ENCODE measurements at regions of chr1 and their contacts with region 1.

Region 1: GRCh38 chr1:156728597-156729462 is at the start of gene ISG20L2:
- DNase-seq: peak; percentile 96
- H3K4me3 Mint-ChIP-seq: no peak within 1 kb of the TSS
- H3K27ac Mint-ChIP-seq: no peak within 1 kb of the TSS
- H3K4me1 Mint-ChIP-seq: peaks cover 30% of the 10 kb centered on the region
- H3K27me3 Mint-ChIP-seq: no peaks in the 10 kb centered on the region
- total RNA-seq, gene ISG20L2: 73.7 and 81.5 TPM in 2 replicates

Region 2: DNA sequence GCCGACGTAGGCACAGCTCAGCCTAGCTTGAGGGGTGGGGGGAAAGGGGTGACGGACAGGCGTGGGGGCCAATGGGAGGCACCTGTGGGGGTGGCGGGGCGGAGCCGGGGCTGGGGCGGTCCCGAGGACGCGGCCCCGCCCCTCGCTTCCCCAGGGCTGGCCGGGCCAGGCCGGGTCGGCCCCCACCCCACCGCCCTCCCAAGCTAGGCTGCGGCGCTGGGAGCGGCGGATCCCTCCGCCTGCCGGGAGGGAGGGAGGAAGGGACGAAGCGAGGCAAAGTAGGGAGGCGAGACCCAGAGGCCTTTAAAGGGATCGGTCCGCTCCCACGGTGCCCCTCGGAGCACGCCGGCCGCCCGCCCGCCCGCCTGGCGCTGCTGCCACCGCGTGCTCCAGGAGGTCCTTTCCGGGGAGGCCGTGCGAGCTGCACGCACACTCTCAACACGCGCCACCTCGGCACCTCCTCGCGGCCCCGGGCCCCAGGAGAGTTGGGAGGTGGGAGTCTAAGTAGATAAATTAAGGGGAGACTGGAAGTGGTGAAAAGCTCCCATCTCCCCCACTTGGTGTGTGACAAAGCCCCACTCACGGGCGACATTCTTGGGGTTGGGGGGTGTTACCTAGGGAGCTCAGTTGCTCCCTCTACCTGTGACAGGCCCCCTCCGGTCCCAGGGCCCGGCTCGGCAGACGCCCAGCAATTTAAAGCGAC is 227.9 kb before region 1 on chr1:
- intact Hi-C with region 1: loop called (anchors 5 kb)
- DNase-seq: peak; percentile 87
- H3K4me3 Mint-ChIP-seq: peak overlapping the region; percentile 90
- H3K27ac Mint-ChIP-seq: peak overlapping the region; percentile 91
- H3K4me1 Mint-ChIP-seq: peaks cover 78% of the 10 kb centered on the region
- H3K27me3 Mint-ChIP-seq: no peaks in the 10 kb centered on the region

Region 3: DNA sequence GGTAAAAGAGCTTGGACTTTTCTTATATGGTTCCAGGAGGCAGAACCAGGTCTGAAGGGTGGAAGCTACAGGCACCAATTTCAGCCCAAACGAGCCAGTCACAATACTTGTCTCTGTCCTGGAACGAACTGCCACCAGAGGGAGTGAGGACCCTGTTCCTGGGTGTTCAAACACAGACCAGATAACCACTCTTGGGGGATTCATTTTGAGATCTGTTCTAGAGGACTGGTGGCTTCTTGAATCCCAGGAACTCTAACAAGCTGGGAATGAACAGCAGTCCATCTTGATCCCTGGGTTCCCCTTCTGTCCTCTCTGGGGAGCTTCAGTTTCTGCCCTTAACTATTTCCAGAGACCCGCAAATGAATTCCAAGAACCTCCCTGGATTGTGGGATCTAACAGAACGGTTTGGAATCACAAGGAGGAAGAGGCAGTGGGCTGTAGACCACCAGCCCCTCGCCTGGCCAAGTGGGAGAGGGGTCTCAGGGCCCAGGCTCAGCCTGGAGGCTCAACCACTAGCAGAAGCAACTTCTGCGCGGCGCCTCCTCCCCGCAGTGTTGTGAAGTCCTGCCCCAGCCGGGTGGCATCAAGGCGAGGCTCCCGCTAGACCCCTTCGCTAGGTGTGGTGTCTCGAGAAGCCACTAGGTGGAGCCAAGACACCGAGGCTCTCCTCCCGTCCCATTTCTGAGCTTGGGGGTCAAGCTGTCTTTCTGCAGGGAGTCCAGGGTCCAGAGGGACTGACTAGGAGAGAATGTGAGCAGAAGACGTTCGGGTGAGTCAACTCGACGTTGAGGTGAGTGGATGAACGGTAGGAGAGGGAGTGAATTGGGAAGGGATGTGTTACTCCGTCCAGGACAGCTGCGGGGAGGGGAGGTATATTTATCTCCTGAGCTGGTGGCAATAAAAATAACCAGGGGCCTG is 39.5 kb before region 1 on chr1:
- intact Hi-C with region 1: loop called (anchors 1 kb)
- DNase-seq: peak; percentile 64
- H3K4me3 Mint-ChIP-seq: peak overlapping the region; percentile 69
- H3K27ac Mint-ChIP-seq: no peak overlapping the region
- H3K4me1 Mint-ChIP-seq: peaks cover 32% of the 10 kb centered on the region
- H3K27me3 Mint-ChIP-seq: peaks cover 54% of the 10 kb centered on the region

Region 4: DNA sequence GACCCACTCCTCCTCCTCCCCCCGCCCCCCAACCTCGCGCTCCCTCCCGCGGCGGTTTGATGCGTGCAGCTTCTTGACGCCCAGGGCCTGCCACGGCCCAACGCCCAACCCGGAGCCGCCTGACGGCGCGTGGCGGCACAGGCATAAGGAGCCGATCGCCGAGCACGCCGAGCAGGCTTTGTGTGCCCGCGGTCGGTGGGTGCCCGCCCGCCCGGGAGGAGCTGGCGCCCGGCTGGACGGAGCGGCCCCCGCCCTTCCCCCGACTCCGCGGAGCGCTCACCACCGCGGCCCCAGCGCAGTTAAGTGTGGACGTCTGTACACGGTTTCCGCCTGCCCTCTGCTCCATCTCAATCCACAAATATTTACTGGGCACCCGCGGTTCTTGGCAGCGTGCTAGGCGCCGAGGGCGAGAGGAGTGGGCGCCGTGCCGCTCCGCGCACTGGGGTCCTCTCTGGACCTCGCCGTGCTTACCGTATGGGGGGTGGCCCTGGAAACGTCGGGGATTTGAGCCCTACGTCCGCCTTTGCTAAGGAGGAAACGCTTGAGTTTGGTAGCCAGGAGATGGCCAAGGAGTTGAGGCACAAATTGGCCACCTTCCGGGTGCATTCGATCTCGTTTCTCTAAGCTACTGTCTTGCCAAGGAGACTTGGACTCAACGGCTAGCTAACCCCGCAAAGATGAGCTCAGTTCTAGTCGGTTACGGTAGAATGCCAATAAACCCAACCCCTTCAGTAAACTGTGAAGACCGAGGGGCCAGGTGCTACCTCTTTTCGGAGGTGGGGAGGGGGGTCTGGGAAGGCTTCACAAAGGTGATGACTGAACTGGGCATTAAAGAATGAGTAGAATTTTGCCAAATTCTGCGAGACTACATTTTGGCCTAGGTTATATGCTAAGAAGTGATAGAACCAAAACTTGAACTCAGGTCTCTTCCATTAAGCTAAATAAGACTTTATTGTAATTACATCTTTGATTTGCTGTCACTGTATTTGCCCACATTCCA is 23.2 kb after region 1 on chr1:
- intact Hi-C with region 1: loop called (anchors 1 kb)
- DNase-seq: peak; percentile 94
- H3K4me3 Mint-ChIP-seq: peak overlapping the region; percentile 97
- H3K27ac Mint-ChIP-seq: peak overlapping the region; percentile 94
- H3K4me1 Mint-ChIP-seq: peaks cover 55% of the 10 kb centered on the region
- H3K27me3 Mint-ChIP-seq: peaks cover 1% of the 10 kb centered on the region

Region 5: GRCh38 chr1:156809711-156810366 is 81.0 kb after region 1 on chr1:
- intact Hi-C with region 1: no loop called
- DNase-seq: no peak
- H3K4me3 Mint-ChIP-seq: peak overlapping the region; percentile 35
- H3K27ac Mint-ChIP-seq: peak overlapping the region; percentile 28
- H3K4me1 Mint-ChIP-seq: peaks cover 83% of the 10 kb centered on the region
- H3K27me3 Mint-ChIP-seq: no peaks in the 10 kb centered on the region

Region 6: GRCh38 chr1:156860113-156860627 is 131.3 kb after region 1 on chr1:
- intact Hi-C with region 1: loop called (anchors 1 kb)
- DNase-seq: peak; percentile 53
- H3K4me3 Mint-ChIP-seq: peak overlapping the region; percentile 88
- H3K27ac Mint-ChIP-seq: peak overlapping the region; percentile 80
- H3K4me1 Mint-ChIP-seq: peaks cover 56% of the 10 kb centered on the region
- H3K27me3 Mint-ChIP-seq: peaks cover 15% of the 10 kb centered on the region

Region 7: DNA sequence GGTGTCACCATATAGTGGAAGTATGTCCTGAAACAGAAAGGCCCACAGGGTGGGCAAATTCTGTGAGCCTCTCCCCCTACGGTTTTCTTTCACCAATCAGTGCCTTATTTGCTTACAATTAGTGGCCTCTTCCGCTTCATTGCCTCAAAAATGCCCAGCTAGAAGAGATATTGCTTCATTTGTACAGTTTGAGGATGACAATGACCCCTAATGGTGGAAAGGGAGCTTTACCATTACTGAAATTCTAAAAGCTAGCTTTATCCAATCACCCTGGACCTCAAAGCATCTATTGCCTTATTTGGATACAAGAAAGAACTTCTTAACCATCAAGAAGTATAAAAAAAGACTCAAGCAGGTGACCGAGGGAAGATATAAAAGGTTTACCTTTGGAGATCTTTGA is 241.2 kb after region 1 on chr1:
- intact Hi-C with region 1: no loop called
- DNase-seq: no peak
- H3K4me3 Mint-ChIP-seq: no peak overlapping the region
- H3K27ac Mint-ChIP-seq: no peak overlapping the region
- H3K4me1 Mint-ChIP-seq: no peaks in the 10 kb centered on the region
- H3K27me3 Mint-ChIP-seq: peaks cover 28% of the 10 kb centered on the region